GM12878 (cell line): ENCODE measurements at regions of chr3 and their contacts with region 1.

Region 1: GRCh38 chr3:50350527-50351322 is at the starts of genes CYB561D2 and NPRL2:
- DNase-seq: peak; percentile 89
- ATAC-seq: peak; percentile 95
- H3K4me3 ChIP-seq: peak within 1 kb of the TSS; percentile 83
- H3K27ac ChIP-seq: peak within 1 kb of the TSS; percentile 86
- H3K4me1 ChIP-seq: peaks cover 22% of the 10 kb centered on the region
- H3K27me3 ChIP-seq: no peaks in the 10 kb centered on the region
- CTCF ChIP-seq: no peak
- EP300 ChIP-seq: 0 out of 4 replicates have a peak, but pooled peaks of 1 of the 2 experiments have one; percentile 9
- POLR2A ChIP-seq: peak; percentile 96
- RAD21 ChIP-seq: no peak
- polyA plus RNA-seq, gene CYB561D2: 7.6 to 11.9 TPM
- polyA plus RNA-seq, gene NPRL2: 33.6 to 36.2 TPM

Region 2: GRCh38 chr3:50298836-50299637 is 51.7 kb before region 1 on chr3 and contains the starts of genes HYAL3 and NAA80:
- CTCF ChIA-PET with region 1: interaction called, 3 read pairs
- POLR2A ChIA-PET with region 1: interaction called, 11 read pairs
- RAD21 ChIA-PET with region 1: interaction called, 5 read pairs
- SMC1A ChIA-PET with region 1: interaction called, 3 read pairs
- in situ Hi-C with region 1: no loop called
- intact Hi-C with region 1: no loop called
- DNase-seq: peak; percentile 98
- ATAC-seq: peak; percentile 90
- H3K4me3 ChIP-seq: peak within 1 kb of the TSS; percentile 82
- H3K27ac ChIP-seq: peak within 1 kb of the TSS; percentile 83
- H3K4me1 ChIP-seq: peaks cover 4% of the 10 kb centered on the region
- H3K27me3 ChIP-seq: no peaks in the 10 kb centered on the region
- CTCF ChIP-seq: peak; percentile 24 to 56 (median 50); a peak in 4 of 6 replicates
- EP300 ChIP-seq: no peak
- POLR2A ChIP-seq: peak; percentile 99
- RAD21 ChIP-seq: no peak
- polyA plus RNA-seq, gene HYAL3: 0.37 TPM
- polyA plus RNA-seq, gene NAA80: 0.48 to 0.62 TPM

Region 3: GRCh38 chr3:50542177-50543034 is 191.7 kb after region 1 on chr3:
- CTCF ChIA-PET with region 1: interaction called, 65 read pairs
- POLR2A ChIA-PET with region 1: no interaction called
- RAD21 ChIA-PET with region 1: interaction called, 13 read pairs
- SMC1A ChIA-PET with region 1: interaction called, 16 read pairs
- in situ Hi-C with region 1: loop called (anchors 5 kb)
- intact Hi-C with region 1: loop called (anchors 2 kb)
- DNase-seq: no peak
- ATAC-seq: peak; percentile 87
- H3K4me3 ChIP-seq: no peak overlapping the region
- H3K27ac ChIP-seq: no peak overlapping the region
- H3K4me1 ChIP-seq: no peaks in the 10 kb centered on the region
- H3K27me3 ChIP-seq: peaks cover 3 to 5% of the 10 kb centered on the region in 2 experiments; a peak in 3 of 4 replicates
- CTCF ChIP-seq: peak; percentile 86 to 90 (median 86)
- EP300 ChIP-seq: no peak
- POLR2A ChIP-seq: no peak
- RAD21 ChIP-seq: peak; percentile 54

Region 4: GRCh38 chr3:50617096-50617791 is 266.5 kb after region 1 on chr3 and contains the start of gene MAPKAPK3:
- CTCF ChIA-PET with region 1: interaction called, 5 read pairs
- POLR2A ChIA-PET with region 1: no interaction called
- RAD21 ChIA-PET with region 1: interaction called, 13 read pairs
- SMC1A ChIA-PET with region 1: no interaction called
- in situ Hi-C with region 1: no loop called
- intact Hi-C with region 1: loop called (anchors 2 kb)
- DNase-seq: no peak
- ATAC-seq: peak; percentile 30
- H3K4me3 ChIP-seq: peak within 1 kb of the TSS; percentile 87
- H3K27ac ChIP-seq: peak within 1 kb of the TSS; percentile 57
- H3K4me1 ChIP-seq: peaks cover 23% of the 10 kb centered on the region
- H3K27me3 ChIP-seq: no peaks in the 10 kb centered on the region
- CTCF ChIP-seq: no peak
- EP300 ChIP-seq: no peak
- POLR2A ChIP-seq: peak; percentile 71
- RAD21 ChIP-seq: no peak
- polyA plus RNA-seq, gene MAPKAPK3: 7.9 to 8.7 TPM